ENCODE measurements at regions of chr16 and their contacts with region 1.

Region 1: GRCh38 chr16:51762081-51762996 is 611.3 kb upstream of the SALL1 start:
- DNase-seq: peak; percentile 71 to 98 (median 89)

Region 2: GRCh38 chr16:50861970-50862411 is 900.3 kb before region 1 on chr16:
- intact Hi-C with region 1: loop called (anchors 5 kb)
- DNase-seq: no peak

Region 3: DNA sequence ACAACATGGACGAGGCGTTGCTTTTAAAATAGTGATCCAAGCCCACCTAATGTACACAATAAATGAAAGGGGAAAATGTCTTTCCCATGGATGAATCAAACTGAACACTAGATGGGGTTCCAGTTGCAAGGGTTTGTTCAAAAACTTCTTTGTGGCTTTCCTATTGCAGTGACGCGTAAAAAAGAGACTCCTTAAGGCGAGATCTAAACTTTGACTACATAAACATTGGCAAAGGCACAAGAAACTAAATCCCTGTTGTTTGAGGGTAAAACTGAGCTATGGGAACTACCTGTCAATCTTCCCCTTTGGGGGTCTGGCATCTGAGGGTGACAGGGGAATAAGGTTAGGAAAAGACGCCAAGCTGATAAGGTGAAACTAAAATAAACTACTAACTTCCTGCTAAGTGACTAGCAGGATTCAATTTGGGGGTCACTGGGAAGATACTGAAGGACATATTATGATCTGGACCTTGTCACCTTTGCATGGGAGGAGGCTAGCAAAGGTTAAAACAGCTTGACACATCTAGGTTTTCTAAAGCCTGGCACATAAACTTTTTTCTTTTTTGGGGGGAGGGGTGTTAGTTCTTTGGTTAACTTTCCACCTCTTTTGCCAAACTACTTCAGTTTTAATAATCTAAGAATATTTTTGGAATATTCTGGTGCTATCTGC is 615.9 kb before region 1 on chr16:
- intact Hi-C with region 1: loop called (anchors 2 kb)
- DNase-seq: no peak

Region 4: GRCh38 chr16:51473091-51473490 is 289.2 kb before region 1 on chr16:
- intact Hi-C with region 1: no loop called
- DNase-seq: no peak

Region 5: DNA sequence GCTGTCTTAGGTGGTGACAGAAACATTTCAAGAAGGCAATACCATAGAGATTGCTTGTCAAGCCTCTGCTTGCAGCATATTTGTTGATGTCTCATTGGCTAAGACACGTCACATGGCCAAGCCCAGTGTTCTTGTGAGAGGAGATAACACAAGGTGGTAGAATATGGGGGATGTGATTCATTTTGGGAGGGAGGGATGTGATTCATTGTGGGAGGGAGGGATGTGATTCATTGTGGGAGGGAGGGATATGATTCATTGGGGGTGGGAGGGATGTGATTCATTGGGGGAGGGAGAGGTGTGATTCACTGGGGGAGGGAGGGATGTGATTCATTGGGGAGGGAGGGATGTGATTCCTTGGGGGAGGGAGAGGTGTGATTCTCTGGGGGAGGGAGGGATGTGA is 140.7 kb before region 1 on chr16:
- intact Hi-C with region 1: no loop called
- DNase-seq: no peak

Region 6: DNA sequence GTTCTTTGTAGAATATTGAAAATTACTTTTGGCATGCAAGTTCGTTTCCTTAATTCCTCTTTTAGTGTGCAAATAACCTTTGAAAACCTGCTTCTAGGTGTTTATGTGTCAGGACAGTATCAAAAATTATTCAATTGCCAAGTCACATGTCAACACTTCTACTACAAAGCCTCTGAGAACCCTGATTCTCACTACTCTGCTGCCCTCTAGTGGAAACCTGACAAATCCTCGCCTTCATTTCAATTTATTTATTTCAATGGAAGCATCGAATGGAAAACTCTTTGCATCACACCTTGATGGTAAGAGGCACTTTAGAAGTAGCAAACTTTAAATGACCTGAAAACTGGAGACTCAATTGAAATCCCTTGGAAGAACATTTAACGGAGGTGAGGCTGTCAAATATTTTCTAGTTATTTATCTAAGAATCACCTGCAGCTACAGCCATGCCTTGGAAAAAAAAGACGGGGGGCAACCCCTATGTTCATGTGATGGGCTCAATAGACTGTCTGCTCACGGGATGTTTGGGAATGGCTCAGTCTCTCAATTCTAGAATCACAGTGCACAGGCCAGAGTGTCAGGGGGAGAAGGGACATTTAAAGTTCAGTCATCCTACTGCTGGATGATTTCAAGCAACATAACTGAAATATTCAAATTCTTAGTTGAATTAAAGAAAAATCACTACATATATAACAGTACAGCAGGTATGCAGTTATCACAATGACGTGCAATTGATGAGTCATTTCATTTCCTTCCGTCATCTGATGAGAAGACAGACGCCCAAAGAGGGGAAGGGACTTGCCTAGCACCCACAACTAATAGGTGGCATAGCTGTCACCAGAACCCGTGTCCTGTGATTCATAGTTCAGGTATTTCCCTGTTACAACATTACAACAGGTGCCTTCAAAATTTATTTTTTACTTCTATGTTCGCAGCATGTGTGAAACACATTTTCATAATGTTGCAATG is 220.7 kb after region 1 on chr16:
- intact Hi-C with region 1: loop called (anchors 10 kb)
- DNase-seq: peak in 3 of 10 donors; percentile 12 to 51 (median 45)